Heart left ventricle (tissue), 16 donors: ENCODE measurements at regions of chr14 and their contacts with region 1.

Region 1: GRCh38 chr14:60311417-60311816 is 62.4 kb downstream of the PPM1A start:
- DNase-seq: no peak
- ATAC-seq: no peak
- H3K4me3 ChIP-seq: no peak overlapping the region
- H3K27ac ChIP-seq: no peak overlapping the region
- H3K4me1 ChIP-seq: no peaks in the 10 kb centered on the region
- H3K27me3 ChIP-seq: peaks cover 0 to 24% (median 0%) of the 10 kb centered on the region in 9 donors
- CTCF ChIP-seq: no peak
- POLR2A ChIP-seq: no peak

Region 2: GRCh38 chr14:60204104-60204842 is 107.1 kb before region 1 on chr14:
- intact Hi-C with region 1: loop called in 1 of 10 experiments (anchors 10 kb)
- DNase-seq: no peak
- ATAC-seq: peak in 2 of 4 donors; percentile 28 to 47
- H3K4me3 ChIP-seq: no peak overlapping the region
- H3K27ac ChIP-seq: peak overlapping the region in 6 of 12 donors; percentile 4 to 57 (median 28)
- H3K4me1 ChIP-seq: peaks cover 0 to 15% (median 8%) of the 10 kb centered on the region in 12 donors
- H3K27me3 ChIP-seq: no peaks in the 10 kb centered on the region
- CTCF ChIP-seq: no peak
- POLR2A ChIP-seq: no peak

Region 3: DNA sequence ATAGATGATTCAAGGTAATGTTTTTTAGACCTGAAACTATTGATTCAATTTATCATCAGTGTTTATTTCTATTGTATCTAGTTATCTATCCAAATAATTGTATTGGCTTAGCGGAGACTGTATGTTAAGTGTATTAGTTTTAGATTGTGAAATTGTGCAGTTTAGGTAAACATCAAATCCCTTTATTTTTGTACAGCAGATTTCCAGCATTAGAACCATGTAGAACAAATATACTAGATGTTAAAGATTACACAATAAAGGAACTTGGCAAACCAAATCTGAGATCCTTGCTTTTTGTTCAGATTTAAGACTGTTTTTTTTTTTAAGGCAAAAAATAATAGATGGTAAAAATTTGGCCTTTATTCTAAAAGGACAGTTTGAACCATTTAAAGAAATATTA is 23.1 kb before region 1 on chr14:
- intact Hi-C with region 1: no loop called
- DNase-seq: no peak
- ATAC-seq: no peak
- H3K4me3 ChIP-seq: no peak overlapping the region
- H3K27ac ChIP-seq: no peak overlapping the region
- H3K4me1 ChIP-seq: peaks cover 0 to 3% (median 0%) of the 10 kb centered on the region in 12 donors
- H3K27me3 ChIP-seq: no peaks in the 10 kb centered on the region
- CTCF ChIP-seq: no peak
- POLR2A ChIP-seq: no peak